ENCODE measurements at regions of chr1 and their contacts with region 1.

Region 1: DNA sequence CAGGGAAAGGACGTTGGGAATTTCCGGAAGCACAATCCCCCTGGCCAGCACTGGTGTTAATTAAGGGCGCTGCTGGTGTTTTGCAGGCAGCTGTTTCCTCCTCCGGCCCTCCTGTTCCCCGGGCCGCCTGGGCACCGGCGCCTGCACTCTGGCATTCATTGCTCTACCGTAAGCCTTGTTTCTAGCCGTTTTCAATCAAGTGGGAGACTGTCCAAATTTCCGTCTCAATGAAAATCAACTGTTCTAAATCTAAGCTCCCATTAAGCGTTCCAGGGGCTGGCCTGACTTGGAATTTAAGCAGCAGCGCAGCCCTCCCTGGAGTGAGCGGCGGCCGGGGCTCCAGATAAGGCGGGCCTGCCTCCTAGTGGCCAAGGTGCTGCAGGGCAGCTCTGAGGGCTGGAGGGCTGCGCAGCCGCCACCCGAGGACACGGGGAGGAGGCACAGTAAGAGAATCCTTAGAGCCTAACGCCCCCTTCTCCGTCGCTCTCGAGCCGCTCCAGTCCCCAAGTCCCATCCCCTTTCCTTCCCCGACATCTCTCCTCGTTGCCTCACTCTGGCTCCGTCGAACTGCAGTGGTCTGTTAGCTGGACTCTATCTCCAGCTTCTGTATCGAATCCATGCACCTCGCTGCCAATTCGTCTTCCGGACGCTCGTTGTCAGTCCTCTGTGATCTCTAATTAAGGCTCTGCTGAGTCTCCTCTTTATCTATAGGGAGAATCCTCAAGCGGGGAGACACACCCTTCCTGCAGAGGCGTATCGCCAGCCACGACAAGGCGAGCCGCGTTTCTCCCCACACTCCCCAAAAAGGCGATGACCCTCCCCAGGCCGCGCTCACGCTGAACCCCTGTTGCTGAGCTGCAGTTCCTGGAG is 57.8 kb upstream of the LRRC8D start:
- DNase-seq: peak; percentile 90
- H3K4me3 ChIP-seq: peak overlapping the region; percentile 52 to 60
- H3K27ac ChIP-seq: peak overlapping the region in 1 of 2 experiments; percentile 86; a peak in 2 of 4 replicates
- H3K4me1 ChIP-seq: peaks cover 5 to 22% of the 10 kb centered on the region in 2 experiments; a peak in 3 of 4 replicates
- H3K27me3 ChIP-seq: no peaks in the 10 kb centered on the region
- CTCF ChIP-seq: peak; percentile 97
- EP300 ChIP-seq: peak in 1 of 2 experiments; percentile 48; a peak in 2 of 4 replicates
- RAD21 ChIP-seq: peak; percentile 91

Region 2: DNA sequence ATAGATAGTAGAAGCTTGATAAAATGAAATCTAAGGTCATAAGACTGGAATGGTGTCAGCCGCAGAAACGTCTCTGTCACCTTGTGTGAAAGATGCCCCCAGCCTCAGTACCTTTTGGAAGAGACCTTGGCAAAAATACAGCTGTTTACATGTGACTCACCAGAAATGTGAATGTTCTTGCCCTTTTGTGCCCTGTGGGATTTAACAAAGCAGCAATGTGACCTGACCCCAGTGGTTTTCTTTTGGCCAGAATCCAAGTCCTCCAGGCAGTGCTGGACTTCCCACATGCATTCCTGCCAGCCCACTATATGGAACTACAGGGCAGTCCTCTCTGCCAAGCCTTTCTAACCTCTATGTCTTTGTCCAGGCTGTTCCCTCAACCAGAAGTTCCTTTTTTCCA is 157.3 kb before region 1 on chr1:
- CTCF ChIA-PET with region 1: interaction called, 19 read pairs
- POLR2A ChIA-PET with region 1: no interaction called
- DNase-seq: no peak
- H3K4me3 ChIP-seq: no peak overlapping the region
- H3K27ac ChIP-seq: no peak overlapping the region
- H3K4me1 ChIP-seq: peaks cover 3 to 20% of the 10 kb centered on the region in 2 experiments; a peak in 3 of 4 replicates
- H3K27me3 ChIP-seq: no peaks in the 10 kb centered on the region
- CTCF ChIP-seq: no peak
- EP300 ChIP-seq: peak in 1 of 2 experiments; percentile 36; a peak in 1 of 4 replicates
- RAD21 ChIP-seq: no peak

Region 3: DNA sequence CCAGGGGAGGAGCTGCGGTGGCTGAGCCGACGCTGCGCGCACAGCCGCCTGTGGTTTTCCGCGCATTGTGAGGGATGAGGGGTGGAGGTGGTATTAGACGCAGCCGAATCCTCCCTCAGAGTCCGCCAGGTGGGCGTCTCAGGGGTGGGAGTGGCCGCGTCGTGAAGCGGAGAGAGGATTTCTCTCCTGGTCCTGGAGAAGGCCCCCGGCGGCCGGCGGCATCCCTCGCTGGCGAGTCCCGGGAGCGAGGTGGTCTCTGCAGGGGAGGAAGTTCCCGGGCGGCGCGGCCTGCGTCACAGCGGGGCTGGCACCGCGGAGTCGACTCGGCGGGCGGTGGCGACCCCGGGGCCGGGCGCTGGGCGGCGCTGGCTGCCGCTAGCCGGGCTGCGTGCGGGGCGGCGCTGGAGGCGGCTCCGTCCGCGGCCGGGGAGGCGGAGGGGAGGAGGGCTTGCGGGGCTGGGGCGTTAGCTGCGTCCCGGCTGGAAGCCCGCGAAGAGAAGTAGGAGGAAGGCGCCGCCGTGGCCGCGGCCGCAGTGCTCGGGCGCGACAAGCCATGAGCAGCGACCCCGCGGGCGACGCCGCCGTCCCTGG is 130.3 kb before region 1 on chr1 and contains the start of gene LRRC8C:
- CTCF ChIA-PET with region 1: interaction called, 265 read pairs
- POLR2A ChIA-PET with region 1: interaction called, 20 read pairs
- DNase-seq: peak; percentile 95
- H3K4me3 ChIP-seq: peak within 1 kb of the TSS; percentile 95
- H3K27ac ChIP-seq: peak within 1 kb of the TSS; percentile 66 to 88
- H3K4me1 ChIP-seq: peaks cover 12% of the 10 kb centered on the region in 2 experiments
- H3K27me3 ChIP-seq: no peaks in the 10 kb centered on the region
- CTCF ChIP-seq: peak; percentile 27
- EP300 ChIP-seq: no peak
- RAD21 ChIP-seq: peak; percentile 63
- polyA plus RNA-seq, gene LRRC8C: 4.2 and 5.2 TPM in 2 replicates

Region 4: DNA sequence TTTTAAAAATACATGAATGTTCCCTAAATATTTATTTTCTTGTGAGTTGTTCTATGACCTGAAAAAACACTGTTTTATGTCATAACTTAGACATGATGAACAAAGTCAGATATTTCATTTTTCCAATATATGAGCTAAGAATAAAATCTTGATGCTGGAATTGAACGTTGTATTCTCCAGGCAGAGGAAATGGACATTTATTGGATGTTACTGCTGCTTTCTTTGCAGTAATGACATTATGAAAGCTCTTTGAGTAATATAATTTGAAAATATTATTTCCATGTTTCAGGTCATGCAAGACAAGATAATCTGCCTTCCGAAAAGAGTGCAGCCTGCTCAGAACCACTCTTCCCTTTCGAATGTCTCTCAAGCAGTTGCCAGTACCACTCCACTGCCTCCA is 50.6 kb before region 1 on chr1:
- CTCF ChIA-PET with region 1: interaction called, 24 read pairs
- POLR2A ChIA-PET with region 1: no interaction called
- DNase-seq: peak; percentile 37
- H3K4me3 ChIP-seq: no peak overlapping the region
- H3K27ac ChIP-seq: peak overlapping the region in 1 of 2 experiments; percentile 64; a peak in 2 of 4 replicates
- H3K4me1 ChIP-seq: peaks cover 6 to 20% of the 10 kb centered on the region in 2 experiments; a peak in 3 of 4 replicates
- H3K27me3 ChIP-seq: no peaks in the 10 kb centered on the region
- CTCF ChIP-seq: no peak
- EP300 ChIP-seq: peak in 1 of 2 experiments; percentile 86; a peak in 2 of 4 replicates
- RAD21 ChIP-seq: 0 out of 2 replicates have a peak, but pooled peaks have one; percentile 19

Region 5: GRCh38 chr1:89743788-89744187 is 19.2 kb before region 1 on chr1:
- CTCF ChIA-PET with region 1: interaction called, 13 read pairs
- POLR2A ChIA-PET with region 1: no interaction called
- DNase-seq: no peak
- H3K4me3 ChIP-seq: no peak overlapping the region
- H3K27ac ChIP-seq: no peak overlapping the region
- H3K4me1 ChIP-seq: peaks cover 0 to 8% of the 10 kb centered on the region in 2 experiments; a peak in 1 of 4 replicates
- H3K27me3 ChIP-seq: no peaks in the 10 kb centered on the region
- CTCF ChIP-seq: no peak
- EP300 ChIP-seq: no peak
- RAD21 ChIP-seq: no peak

Measured in SK-N-SH (cell line).